ENCODE measurements at regions of chr3 and their contacts with region 1.

Region 1: GRCh38 chr3:48507351-48508061 is 3.5 kb upstream of the SHISA5 start:
- DNase-seq: peak; percentile 91
- H3K4me3 Mint-ChIP-seq: peak overlapping the region; percentile 38
- H3K27ac Mint-ChIP-seq: peak overlapping the region; percentile 44
- H3K4me1 Mint-ChIP-seq: peaks cover 40% of the 10 kb centered on the region
- H3K27me3 Mint-ChIP-seq: no peaks in the 10 kb centered on the region

Region 2: GRCh38 chr3:48446425-48447193 is 60.9 kb before region 1 on chr3 and contains the start of gene ATRIP:
- intact Hi-C with region 1: loop called (anchors 2 kb)
- DNase-seq: peak; percentile 98
- H3K4me3 Mint-ChIP-seq: peak within 1 kb of the TSS; percentile 93
- H3K27ac Mint-ChIP-seq: peak within 1 kb of the TSS; percentile 91
- H3K4me1 Mint-ChIP-seq: peaks cover 25% of the 10 kb centered on the region
- H3K27me3 Mint-ChIP-seq: no peaks in the 10 kb centered on the region
- total RNA-seq, gene ATRIP: 18.3 and 20.0 TPM in 2 replicates

Region 3: GRCh38 chr3:48465531-48466378 is 41.8 kb before region 1 on chr3:
- intact Hi-C with region 1: loop called (anchors 1 kb)
- DNase-seq: peak; percentile 95
- H3K4me3 Mint-ChIP-seq: peak overlapping the region; percentile 96
- H3K27ac Mint-ChIP-seq: peak overlapping the region; percentile 93
- H3K4me1 Mint-ChIP-seq: peaks cover 46% of the 10 kb centered on the region
- H3K27me3 Mint-ChIP-seq: no peaks in the 10 kb centered on the region

Region 4: DNA sequence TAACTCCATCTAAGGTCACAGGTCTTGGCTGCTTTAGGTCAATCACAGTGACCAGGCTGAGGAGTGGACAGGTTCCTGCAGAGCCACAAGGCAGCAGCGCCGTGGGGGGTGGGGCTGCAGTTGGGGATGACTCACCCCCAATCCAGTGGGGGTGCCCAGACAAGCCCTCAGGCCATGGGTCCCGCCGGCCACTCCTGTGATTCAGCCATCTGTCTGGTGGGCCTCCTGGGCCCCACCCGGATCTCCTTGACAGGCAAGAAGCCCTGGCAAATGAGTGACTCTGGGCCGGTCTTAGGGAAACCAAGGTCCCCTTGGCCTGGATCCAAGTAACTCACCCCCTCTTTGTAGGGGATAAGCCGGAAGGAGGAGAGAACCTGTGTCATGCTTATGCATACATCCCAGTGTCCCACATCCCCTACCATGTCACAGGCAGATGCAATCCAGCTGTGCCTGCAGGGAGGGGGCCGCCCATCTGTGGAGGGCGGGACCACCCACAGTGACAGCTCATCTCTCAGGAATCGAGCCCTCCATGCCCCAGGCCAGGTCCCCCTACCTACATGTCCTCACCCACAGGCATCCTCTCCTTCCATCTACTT is 88.1 kb after region 1 on chr3:
- intact Hi-C with region 1: no loop called
- DNase-seq: no peak
- H3K4me3 Mint-ChIP-seq: no peak overlapping the region
- H3K27ac Mint-ChIP-seq: no peak overlapping the region
- H3K4me1 Mint-ChIP-seq: peaks cover 2% of the 10 kb centered on the region
- H3K27me3 Mint-ChIP-seq: peaks cover 18% of the 10 kb centered on the region

Region 5: DNA sequence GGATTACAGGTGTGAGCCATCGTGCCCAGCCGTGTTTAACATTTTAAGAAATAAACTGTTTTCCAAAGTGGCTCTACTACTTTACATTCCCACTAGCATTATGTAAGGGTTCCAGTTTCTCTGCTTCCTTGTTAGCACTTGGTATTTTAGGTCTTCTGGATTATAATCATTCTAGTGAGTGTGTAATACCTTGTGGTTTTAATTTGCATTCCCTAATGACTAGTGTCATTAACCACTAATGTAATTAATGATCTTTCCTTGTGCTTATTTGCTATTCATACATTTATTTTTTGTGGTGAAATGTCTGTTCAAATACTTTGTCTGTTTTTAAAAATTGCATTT is 441.8 kb after region 1 on chr3:
- intact Hi-C with region 1: no loop called
- DNase-seq: no peak
- H3K4me3 Mint-ChIP-seq: no peak overlapping the region
- H3K27ac Mint-ChIP-seq: no peak overlapping the region
- H3K4me1 Mint-ChIP-seq: peaks cover 33% of the 10 kb centered on the region
- H3K27me3 Mint-ChIP-seq: no peaks in the 10 kb centered on the region